ENCODE measurements at regions of chr7 and their contacts with region 1.

Region 1: DNA sequence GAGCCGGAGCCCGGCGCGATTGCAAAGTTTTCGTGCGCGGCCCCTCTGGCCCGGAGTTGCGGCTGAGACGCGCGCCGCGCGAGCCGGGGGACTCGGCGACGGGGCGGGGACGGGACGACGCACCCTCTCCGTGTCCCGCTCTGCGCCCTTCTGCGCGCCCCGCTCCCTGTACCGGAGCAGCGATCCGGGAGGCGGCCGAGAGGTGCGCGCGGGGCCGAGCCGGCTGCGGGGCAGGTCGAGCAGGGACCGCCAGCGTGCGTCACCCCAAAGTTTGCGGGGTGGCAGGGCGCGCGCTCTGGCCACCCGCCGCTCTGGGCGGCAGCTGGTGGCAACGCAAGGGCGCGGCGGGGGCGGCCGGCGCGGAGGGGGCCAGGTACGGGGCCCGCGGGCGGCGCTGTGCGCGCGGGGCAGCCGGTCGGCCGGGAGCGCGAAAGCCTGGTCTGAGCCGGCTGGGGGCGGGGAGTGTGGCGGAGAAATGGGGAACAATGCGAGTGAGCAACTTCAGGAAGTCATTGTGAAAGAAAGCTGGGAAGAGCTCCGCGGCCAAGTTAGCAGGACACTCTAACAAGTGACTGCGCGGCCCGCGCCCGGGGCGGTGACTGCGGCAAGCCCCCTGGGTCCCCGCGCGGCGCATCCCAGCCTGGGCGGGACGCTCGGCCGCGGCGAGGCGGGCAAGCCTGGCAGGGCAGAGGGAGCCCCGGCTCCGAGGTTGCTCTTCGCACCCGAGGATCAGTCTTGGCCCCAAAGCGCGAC is at the start of gene IKZF1:
- DNase-seq: peak; percentile 43 to 90
- H3K4me3 ChIP-seq: peak within 1 kb of the TSS; percentile 29
- CTCF ChIP-seq: no peak
- POLR2A ChIP-seq: no peak
- total RNA-seq, gene IKZF1: 5.3 to 10.8 (median 7.6) TPM

Region 2: DNA sequence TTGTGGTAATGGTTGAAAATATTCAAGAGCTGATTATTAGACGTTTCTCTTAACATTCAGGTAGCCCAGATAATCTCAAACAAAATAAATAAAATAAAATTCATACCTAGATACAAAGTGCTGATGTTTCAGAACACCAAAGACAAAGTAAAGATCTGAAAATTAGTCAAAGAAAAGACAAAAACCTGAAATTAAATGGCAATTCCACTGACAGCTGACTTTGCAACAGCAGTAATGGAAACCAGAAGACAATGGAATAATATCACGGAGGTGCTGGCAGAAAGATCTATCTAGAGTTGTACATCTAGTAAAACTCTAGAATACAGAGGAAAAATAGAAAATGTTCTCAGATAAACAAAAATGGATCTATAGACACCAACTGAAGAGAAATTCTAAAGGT is 57.8 kb before region 1 on chr7:
- intact Hi-C with region 1: loop called (anchors 10 kb)
- DNase-seq: no peak
- H3K4me3 ChIP-seq: no peak overlapping the region
- CTCF ChIP-seq: no peak
- POLR2A ChIP-seq: no peak

Region 3: GRCh38 chr7:50418086-50418515 is 113.8 kb after region 1 on chr7:
- intact Hi-C with region 1: no loop called
- DNase-seq: peak in 1 of 2 donors; percentile 53
- H3K4me3 ChIP-seq: no peak overlapping the region
- CTCF ChIP-seq: no peak
- POLR2A ChIP-seq: no peak

Measured in lower leg skin (tissue), 4 donors.